ENCODE measurements at regions of chr1 and their contacts with region 1.

Region 1: GRCh38 chr1:23344111-23344986 is at the start of gene HNRNPR:
- DNase-seq: peak; percentile 89
- ATAC-seq: peak; percentile 96
- H3K4me3 Mint-ChIP-seq: peak within 1 kb of the TSS; percentile 92
- H3K27ac Mint-ChIP-seq: peak within 1 kb of the TSS; percentile 92
- H3K4me1 Mint-ChIP-seq: peaks cover 48% of the 10 kb centered on the region
- H3K27me3 Mint-ChIP-seq: no peaks in the 10 kb centered on the region
- CTCF ChIP-seq: no peak
- total RNA-seq, gene HNRNPR: 171 and 172 TPM in 2 replicates

Region 2: GRCh38 chr1:23019094-23019862 is 325.1 kb before region 1 on chr1 and contains the start of gene KDM1A:
- CTCF ChIA-PET with region 1: no interaction called
- POLR2A ChIA-PET with region 1: interaction called, 13 read pairs
- intact Hi-C with region 1: no loop called
- DNase-seq: peak; percentile 96
- ATAC-seq: peak; percentile 98
- H3K4me3 Mint-ChIP-seq: peak within 1 kb of the TSS; percentile 93
- H3K27ac Mint-ChIP-seq: peak within 1 kb of the TSS; percentile 84
- H3K4me1 Mint-ChIP-seq: peaks cover 38% of the 10 kb centered on the region
- H3K27me3 Mint-ChIP-seq: no peaks in the 10 kb centered on the region
- CTCF ChIP-seq: no peak
- total RNA-seq, gene KDM1A: 40.7 and 41.5 TPM in 2 replicates

Region 3: DNA sequence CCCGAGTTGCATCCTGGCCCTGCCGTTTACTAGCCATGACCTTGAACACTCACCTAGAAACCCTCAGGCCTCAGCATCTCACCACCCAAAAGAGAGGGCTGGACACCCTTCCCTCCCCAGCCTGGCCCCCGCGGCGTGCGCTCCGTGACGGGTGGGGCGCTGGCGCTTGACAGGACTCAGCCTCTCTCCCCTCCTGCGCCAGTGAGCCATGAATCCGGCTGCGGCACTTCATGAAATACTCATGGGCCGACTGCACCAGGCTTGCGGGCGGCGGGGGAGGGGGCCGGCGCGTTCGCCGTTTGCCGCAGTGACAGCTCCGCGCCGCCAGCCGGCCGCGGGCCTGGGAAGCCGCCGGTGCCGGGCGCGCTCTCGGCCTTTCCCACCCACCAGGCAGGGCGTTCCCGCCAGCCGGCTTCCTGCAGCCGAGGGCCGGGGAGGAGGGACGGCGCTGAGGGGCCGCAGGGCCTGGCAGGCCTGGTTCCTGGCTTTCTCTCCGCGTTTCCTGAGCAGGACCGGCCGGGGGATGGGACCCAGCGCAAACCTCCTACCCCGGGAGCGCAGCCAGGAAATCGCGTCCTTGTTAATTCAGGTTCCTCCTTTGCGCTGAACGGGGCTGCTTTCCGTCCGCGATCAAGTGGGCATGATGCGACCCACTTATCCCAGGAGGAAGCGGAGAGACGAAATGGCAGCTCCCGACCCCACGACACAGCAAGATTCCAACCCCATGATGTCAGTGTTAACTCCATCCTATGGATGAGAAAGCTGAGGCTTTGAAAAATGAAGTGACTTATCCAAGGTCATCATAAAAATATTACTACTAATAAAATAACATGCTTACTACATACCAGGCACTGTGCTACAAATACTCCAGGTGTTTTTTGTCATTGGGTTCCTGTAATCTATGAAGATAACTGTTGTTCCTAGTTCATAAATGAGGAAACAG is 166.6 kb before region 1 on chr1:
- CTCF ChIA-PET with region 1: no interaction called
- POLR2A ChIA-PET with region 1: no interaction called
- intact Hi-C with region 1: loop called (anchors 5 kb)
- DNase-seq: peak; percentile 66
- ATAC-seq: peak; percentile 97
- H3K4me3 Mint-ChIP-seq: peak overlapping the region; percentile 77
- H3K27ac Mint-ChIP-seq: peak overlapping the region; percentile 73
- H3K4me1 Mint-ChIP-seq: peaks cover 33% of the 10 kb centered on the region
- H3K27me3 Mint-ChIP-seq: peaks cover 4% of the 10 kb centered on the region
- CTCF ChIP-seq: no peak

Region 4: DNA sequence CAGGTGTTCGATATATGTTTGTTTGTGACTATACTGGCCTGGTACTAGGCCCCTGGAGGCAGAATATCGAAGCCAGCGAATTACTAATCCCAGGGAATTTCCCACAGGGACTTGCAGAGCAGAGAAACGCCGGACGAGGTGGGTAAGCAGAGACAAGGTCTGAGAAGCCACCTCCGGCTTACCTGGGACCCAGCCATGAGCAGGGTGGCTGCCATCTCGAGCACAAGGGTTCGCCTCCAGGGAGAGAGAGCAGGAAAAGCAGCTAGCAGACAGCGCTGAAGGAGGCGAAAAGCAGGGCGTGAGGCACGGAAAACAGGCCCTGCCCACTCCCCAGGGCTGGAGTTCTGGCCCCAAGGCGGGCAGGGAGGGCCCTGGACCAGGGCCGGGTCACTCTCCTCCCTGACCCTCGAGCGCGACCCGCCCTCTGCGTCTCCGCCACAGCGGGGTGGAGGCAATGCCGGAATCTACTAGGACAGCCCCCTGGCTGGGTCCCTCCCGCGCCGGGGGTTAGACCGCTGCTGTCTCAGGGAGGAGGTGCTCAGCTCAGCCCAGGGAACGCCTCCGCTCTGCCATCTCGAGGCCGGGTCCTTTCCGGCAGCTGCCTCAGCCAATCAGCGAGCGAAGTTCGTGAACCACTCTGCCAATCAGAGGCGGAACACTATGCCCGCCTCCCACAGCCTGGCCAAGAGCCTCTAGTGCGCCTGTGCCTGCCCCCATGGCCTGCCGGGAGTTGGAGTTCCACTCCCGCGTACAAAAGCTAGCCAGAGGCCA is 23.6 kb after region 1 on chr1:
- CTCF ChIA-PET with region 1: no interaction called
- POLR2A ChIA-PET with region 1: interaction called, 136 read pairs
- intact Hi-C with region 1: loop called (anchors 1 kb)
- DNase-seq: peak; percentile 88
- ATAC-seq: peak; percentile 88
- H3K4me3 Mint-ChIP-seq: peak overlapping the region; percentile 97
- H3K27ac Mint-ChIP-seq: peak overlapping the region; percentile 97
- H3K4me1 Mint-ChIP-seq: peaks cover 26% of the 10 kb centered on the region
- H3K27me3 Mint-ChIP-seq: no peaks in the 10 kb centered on the region
- CTCF ChIP-seq: no peak

Region 5: DNA sequence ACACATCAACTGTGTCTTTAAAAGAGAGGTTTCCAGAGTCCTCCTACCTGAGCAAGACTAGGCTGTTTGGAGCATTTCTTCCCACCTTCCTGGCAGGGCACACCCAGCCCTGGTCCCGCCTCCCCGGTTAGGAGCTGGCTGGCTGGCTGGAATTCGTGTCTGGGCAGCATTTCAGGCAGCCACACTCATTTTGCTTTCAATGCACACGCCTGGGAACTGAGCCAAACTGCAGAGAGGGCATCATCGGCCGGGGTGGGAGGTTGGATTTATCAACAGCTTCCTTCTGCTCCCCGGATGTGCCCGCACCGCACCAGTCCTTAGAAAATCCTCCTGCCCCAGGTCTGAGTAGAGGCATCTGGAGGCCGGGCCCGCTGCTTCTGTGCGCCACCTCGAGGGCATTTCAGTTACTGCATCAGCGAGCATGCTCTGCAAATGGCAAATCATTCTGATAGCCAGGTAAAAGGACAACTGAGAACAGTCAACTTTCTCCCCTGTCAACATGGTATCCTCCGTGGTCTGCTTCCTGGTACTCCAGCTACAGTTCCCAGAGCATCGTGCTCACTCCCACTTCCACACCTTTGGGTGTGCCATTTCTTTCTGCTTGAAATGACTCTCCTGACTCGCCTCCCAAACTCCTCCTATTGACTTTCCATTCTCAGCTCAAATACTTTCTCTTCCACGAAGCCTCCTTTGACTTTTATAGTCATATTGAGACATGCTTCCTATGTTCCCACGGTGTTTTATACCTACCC is 59.6 kb after region 1 on chr1:
- CTCF ChIA-PET with region 1: interaction called, 3 read pairs
- POLR2A ChIA-PET with region 1: interaction called, 5 read pairs
- intact Hi-C with region 1: loop called (anchors 1 kb)
- DNase-seq: peak; percentile 71
- ATAC-seq: peak; percentile 95
- H3K4me3 Mint-ChIP-seq: no peak overlapping the region
- H3K27ac Mint-ChIP-seq: no peak overlapping the region
- H3K4me1 Mint-ChIP-seq: no peaks in the 10 kb centered on the region
- H3K27me3 Mint-ChIP-seq: peaks cover 7% of the 10 kb centered on the region
- CTCF ChIP-seq: peak; percentile 78

Region 6: GRCh38 chr1:23484253-23485001 is 140.1 kb after region 1 on chr1:
- CTCF ChIA-PET with region 1: no interaction called
- POLR2A ChIA-PET with region 1: interaction called, 8 read pairs
- intact Hi-C with region 1: loop called (anchors 1 kb)
- DNase-seq: peak; percentile 81
- ATAC-seq: peak; percentile 88
- H3K4me3 Mint-ChIP-seq: peak overlapping the region; percentile 91
- H3K27ac Mint-ChIP-seq: peak overlapping the region; percentile 75
- H3K4me1 Mint-ChIP-seq: peaks cover 33% of the 10 kb centered on the region
- H3K27me3 Mint-ChIP-seq: peaks cover 4% of the 10 kb centered on the region
- CTCF ChIP-seq: no peak

Region 7: DNA sequence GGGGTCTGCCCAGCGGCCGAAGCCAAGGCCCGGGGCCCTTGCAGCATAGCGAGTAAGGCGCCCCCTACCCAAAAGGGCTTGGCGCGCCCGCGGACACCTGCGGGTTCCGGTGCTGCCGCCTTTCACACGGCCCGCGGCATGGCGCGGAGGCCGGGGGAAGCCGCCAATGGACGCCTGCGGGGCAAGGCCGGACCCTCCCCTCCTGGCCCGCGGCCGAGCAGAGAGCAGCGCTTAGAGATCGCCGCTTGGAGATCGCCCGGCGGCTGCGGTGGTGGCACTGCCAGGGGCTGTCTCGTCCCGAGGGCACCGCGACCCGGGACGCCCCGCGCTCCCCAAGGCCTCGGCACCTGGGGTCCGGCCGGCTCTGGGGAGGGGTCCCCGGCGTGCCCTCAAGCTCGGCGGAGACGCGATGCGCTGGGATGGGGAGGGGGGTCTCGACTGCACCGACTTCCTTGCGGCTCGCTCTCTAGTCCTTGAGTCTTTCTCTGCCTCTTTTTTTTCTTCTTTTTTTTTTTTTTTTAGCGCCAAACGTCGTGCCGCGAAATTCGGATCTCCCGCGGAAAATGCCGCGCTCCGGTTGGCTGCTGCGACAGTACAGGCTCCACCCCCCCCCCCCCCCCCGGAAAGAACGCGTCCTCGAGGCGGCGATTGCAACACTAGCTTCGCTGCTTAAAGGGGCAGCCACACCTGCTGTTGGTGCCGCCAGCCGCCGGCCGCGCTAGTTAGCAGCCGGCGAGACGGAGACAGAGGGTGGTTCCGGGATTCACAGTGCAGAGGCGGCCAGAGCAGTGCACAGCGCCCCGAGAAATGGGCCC is 186.6 kb after region 1 on chr1 and contains the start of gene E2F2:
- CTCF ChIA-PET with region 1: no interaction called
- POLR2A ChIA-PET with region 1: interaction called, 7 read pairs
- intact Hi-C with region 1: loop called (anchors 1 kb)
- DNase-seq: peak; percentile 68
- ATAC-seq: peak; percentile 73
- H3K4me3 Mint-ChIP-seq: peak within 1 kb of the TSS; percentile 87
- H3K27ac Mint-ChIP-seq: peak within 1 kb of the TSS; percentile 70
- H3K4me1 Mint-ChIP-seq: peaks cover 86% of the 10 kb centered on the region
- H3K27me3 Mint-ChIP-seq: no peaks in the 10 kb centered on the region
- CTCF ChIP-seq: no peak
- total RNA-seq, gene E2F2: 2.4 and 3.4 TPM in 2 replicates